ENCODE measurements at regions of chr7 and their contacts with region 1.

Region 1: DNA sequence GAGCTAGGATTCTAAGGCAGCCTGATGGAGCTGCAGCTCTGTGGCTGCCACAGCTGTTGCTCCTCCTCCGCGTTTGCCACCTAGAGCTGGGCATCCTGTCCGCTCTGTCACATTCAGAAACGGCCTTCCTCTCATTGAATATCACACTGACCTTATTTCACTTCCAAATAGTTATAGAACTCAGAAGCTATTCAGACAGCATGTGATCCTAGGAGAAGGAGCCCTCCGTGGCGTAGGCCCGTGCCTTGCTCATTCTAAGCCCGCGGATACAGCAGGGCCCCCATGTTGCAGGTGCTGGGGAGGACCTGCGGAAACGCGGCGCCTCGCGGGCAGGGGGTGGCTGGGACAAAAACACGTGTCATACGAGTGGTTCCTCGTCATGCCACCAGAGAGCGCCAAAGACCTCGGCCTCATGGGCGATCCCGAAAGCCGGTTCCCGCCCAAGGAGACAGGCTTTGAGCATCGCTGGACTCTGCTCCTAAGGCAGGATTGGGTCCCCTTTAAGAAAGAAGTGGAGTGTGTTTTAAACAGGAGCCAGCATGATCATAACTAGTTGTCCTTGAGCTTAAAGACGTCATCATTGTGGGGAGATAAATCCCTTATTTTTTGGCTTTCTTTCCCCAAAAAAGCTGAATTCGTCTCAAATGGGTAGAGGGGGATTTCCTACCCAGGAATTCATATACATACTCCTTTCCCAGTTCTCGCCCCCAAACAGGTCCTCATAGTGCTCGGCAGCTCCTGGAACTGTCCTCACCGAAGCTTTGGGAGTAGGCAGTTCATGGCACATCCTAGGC is 17.9 kb upstream of the FIGNL1 start:
- DNase-seq: peak; percentile 86
- H3K4me3 ChIP-seq: no peak overlapping the region
- H3K27ac ChIP-seq: no peak overlapping the region
- H3K4me1 ChIP-seq: no peaks in the 10 kb centered on the region
- H3K27me3 ChIP-seq: no peaks in the 10 kb centered on the region
- CTCF ChIP-seq: peak; percentile 85

Region 2: GRCh38 chr7:50632561-50633413 is 164.8 kb after region 1 on chr7:
- intact Hi-C with region 1: loop called (anchors 5 kb)
- DNase-seq: peak; percentile 66
- H3K4me3 ChIP-seq: no peak overlapping the region
- H3K27ac ChIP-seq: no peak overlapping the region
- H3K4me1 ChIP-seq: no peaks in the 10 kb centered on the region
- H3K27me3 ChIP-seq: no peaks in the 10 kb centered on the region
- CTCF ChIP-seq: peak; percentile 88

Region 3: DNA sequence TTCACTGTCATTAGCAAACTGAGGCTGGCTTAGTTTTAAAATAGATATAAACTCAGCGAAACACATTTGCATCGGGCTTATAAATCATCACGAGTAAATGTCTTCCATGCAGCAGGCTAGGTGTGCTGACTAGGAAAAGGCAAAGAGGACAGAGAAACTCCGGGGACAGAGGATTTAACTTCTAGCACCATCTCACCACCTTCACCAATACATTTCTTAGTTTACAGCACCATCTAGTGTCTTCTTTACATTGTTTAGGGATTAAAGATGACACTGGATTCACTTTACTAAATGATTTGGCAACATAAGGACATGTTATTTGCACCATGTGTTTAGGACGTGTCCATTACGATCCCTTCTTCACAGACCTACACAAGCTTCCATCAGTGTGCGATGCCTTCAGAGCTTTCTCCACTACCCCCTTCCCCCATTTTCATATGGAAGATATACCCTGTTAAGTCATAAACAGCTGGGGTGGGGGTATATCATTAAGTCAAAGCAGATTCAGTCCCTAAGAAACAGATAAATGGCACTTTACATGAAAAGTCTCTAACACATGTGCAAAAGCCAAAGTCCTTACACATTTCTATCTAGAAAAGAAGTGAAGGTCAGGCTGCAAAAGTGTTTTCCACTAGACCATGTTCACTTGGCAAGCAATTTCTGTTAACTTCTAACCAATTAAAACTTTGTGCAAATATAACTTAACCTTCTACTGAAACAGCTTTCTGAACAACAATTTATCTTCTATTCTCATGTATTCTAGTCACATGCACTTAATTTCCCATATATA is 211.4 kb after region 1 on chr7:
- intact Hi-C with region 1: loop called (anchors 2 kb)
- DNase-seq: no peak
- H3K4me3 ChIP-seq: no peak overlapping the region
- H3K27ac ChIP-seq: no peak overlapping the region
- H3K4me1 ChIP-seq: no peaks in the 10 kb centered on the region
- H3K27me3 ChIP-seq: no peaks in the 10 kb centered on the region
- CTCF ChIP-seq: no peak

Region 4: GRCh38 chr7:51154201-51154600 is 686.2 kb after region 1 on chr7:
- intact Hi-C with region 1: loop called (anchors 5 kb)
- DNase-seq: no peak
- H3K4me3 ChIP-seq: no peak overlapping the region
- H3K27ac ChIP-seq: no peak overlapping the region
- H3K4me1 ChIP-seq: no peaks in the 10 kb centered on the region
- H3K27me3 ChIP-seq: no peaks in the 10 kb centered on the region
- CTCF ChIP-seq: no peak

Measured in colonic mucosa (tissue), 4 donors.